Spleen (tissue), 13 donors: ENCODE measurements at regions of chr1 and their contacts with region 1.

Region 1: DNA sequence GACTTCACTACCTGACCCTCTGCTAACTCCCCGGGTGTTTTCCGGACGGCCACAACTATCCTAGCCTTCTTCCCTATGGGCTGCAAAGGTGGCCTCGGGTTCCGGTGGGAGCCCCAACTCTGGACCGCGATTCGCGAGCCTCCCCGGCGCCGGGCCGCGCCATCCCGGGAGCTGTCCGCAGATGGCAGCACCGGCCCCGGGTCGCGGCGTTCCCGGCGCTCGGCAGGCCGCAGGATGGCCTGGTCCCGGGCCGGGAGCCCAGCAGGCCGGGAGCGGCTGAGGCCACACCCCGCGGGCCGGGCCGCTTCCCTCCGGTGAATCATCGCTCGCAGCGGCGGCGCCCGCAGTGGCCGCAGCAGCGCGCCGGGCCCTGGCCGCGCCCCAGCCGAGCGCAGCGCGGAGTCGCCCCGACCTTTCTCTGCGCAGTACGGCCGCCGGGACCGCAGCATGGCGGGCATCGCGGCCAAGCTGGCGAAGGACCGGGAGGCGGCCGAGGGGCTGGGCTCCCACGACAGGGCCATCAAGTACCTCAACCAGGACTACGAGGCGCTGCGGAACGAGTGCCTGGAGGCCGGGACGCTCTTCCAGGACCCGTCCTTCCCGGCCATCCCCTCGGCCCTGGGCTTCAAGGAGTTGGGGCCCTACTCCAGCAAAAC is at the start of gene CAPN2:
- DNase-seq: peak; percentile 93
- H3K4me3 ChIP-seq: peak within 1 kb of the TSS; percentile 50 to 92 (median 70)
- H3K27ac ChIP-seq: peak within 1 kb of the TSS; percentile 79 to 97 (median 91)
- H3K4me1 ChIP-seq: peaks cover 45 to 79% (median 61%) of the 10 kb centered on the region in 6 donors
- H3K27me3 ChIP-seq: no peaks in the 10 kb centered on the region
- CTCF ChIP-seq: peak; percentile 32 to 83 (median 73)
- POLR2A ChIP-seq: peak in 1 of 3 donors; percentile 30
- total RNA-seq, gene CAPN2: 48.8 to 106 (median 88.8) TPM

Region 2: GRCh38 chr1:223609066-223609465 is 103.3 kb before region 1 on chr1:
- intact Hi-C with region 1: no loop called
- DNase-seq: no peak
- H3K4me3 ChIP-seq: no peak overlapping the region
- H3K27ac ChIP-seq: no peak overlapping the region
- H3K4me1 ChIP-seq: no peaks in the 10 kb centered on the region
- H3K27me3 ChIP-seq: no peaks in the 10 kb centered on the region
- CTCF ChIP-seq: no peak
- POLR2A ChIP-seq: no peak

Region 3: GRCh38 chr1:223748773-223749733 is 36.7 kb after region 1 on chr1:
- intact Hi-C with region 1: loop called (anchors 5 kb)
- DNase-seq: peak; percentile 94
- H3K4me3 ChIP-seq: peak overlapping the region; percentile 29 to 67 (median 43)
- H3K27ac ChIP-seq: peak overlapping the region in 6 of 8 donors; percentile 28 to 73 (median 54)
- H3K4me1 ChIP-seq: peaks cover 7 to 29% (median 21%) of the 10 kb centered on the region in 6 donors
- H3K27me3 ChIP-seq: no peaks in the 10 kb centered on the region
- CTCF ChIP-seq: peak; percentile 61 to 97 (median 90)
- POLR2A ChIP-seq: no peak

Region 4: DNA sequence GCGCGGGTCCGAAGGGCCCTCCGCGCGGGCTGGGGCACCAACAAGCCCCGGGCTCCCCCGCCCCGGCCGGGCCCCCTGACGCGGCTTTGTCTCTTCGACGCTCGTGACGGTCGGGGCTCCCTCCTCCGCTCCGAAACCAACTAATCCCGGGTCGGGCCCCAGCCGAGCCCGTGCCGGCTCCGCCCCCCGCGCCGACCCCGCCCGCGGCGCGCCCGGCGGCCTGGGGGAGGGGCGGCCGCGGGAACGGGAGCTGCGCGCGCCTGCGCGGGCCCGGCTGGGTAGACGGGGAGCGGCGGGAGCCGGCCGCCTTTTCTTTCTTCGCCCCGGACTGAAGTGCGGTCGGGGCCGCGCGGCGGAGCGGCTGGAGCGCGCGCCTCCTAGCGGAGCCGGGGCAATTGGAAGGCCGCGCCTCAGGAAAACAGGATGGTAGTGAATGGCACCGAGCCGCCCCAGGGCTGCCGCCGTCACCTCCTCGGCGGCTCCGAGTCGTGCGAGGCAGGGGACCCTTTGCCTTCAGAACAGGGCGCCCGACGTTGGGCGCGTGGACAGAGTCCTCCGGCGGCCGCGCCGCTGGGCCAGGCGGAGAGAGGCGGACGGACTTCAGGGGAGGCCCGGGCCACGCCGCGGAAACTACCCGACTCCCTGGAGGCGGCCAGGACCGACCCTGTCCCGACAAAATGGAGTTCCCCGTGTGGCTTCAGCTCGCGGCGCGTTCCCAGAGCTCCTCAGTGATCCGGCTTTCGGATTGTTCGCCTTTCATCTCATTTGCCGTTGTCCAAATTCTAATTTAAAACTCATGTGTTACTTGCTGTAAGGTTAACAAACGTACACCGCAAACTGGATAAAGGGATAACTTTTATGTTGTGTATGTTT is 133.7 kb after region 1 on chr1 and contains the start of gene TP53BP2:
- intact Hi-C with region 1: loop called (anchors 10 kb)
- DNase-seq: peak; percentile 96
- H3K4me3 ChIP-seq: peak within 1 kb of the TSS; percentile 70 to 96 (median 80)
- H3K27ac ChIP-seq: peak within 1 kb of the TSS; percentile 96 to 100 (median 99)
- H3K4me1 ChIP-seq: peaks cover 24 to 57% (median 45%) of the 10 kb centered on the region in 6 donors
- H3K27me3 ChIP-seq: no peaks in the 10 kb centered on the region
- CTCF ChIP-seq: peak; percentile 49 to 83 (median 72)
- POLR2A ChIP-seq: peak; percentile 48 to 77 (median 56)
- total RNA-seq, gene TP53BP2: 27.1 to 50.7 (median 42.2) TPM